Activated CD4-positive, alpha-beta T cell treated with anti-CD3 and anti-CD28 coated beads for 36 hours (primary cell): ENCODE measurements at regions of chr17 and their contacts with region 1.

Region 1: GRCh38 chr17:14427900-14428647 is 127.2 kb downstream of the HS3ST3B1 start:
- DNase-seq: peak; percentile 72
- ATAC-seq: peak; percentile 97
- H3K4me3 Mint-ChIP-seq: peak overlapping the region; percentile 63
- H3K27ac Mint-ChIP-seq: peak overlapping the region; percentile 97
- H3K4me1 Mint-ChIP-seq: peaks cover 59% of the 10 kb centered on the region
- H3K27me3 Mint-ChIP-seq: no peaks in the 10 kb centered on the region

Region 2: DNA sequence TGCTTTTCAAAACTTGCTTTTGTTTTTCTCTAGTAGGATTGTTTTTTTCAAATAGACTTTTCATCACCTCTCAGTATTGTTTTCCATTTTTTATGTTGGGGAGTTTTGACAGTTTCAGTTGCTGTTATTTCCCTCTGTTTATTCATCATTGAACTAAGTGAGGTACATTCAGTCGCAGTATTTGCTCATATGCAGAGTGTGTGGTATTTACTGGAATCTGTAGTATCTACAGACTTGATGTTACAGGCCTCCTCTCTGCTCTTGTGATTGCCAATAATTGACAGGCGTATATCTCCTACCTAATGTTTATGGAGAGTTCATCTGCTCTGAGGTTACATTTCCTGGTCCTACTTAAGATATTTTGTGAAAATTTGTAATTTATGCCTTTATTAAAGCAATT is 309.1 kb before region 1 on chr17:
- CTCF ChIA-PET with region 1: no interaction called
- POLR2A ChIA-PET with region 1: no interaction called
- intact Hi-C with region 1: loop called in 1 of 2 experiments (anchors 10 kb)
- DNase-seq: peak; percentile 17
- ATAC-seq: peak; percentile 84
- H3K4me3 Mint-ChIP-seq: no peak overlapping the region
- H3K27ac Mint-ChIP-seq: peak overlapping the region; percentile 92
- H3K4me1 Mint-ChIP-seq: peaks cover 89% of the 10 kb centered on the region
- H3K27me3 Mint-ChIP-seq: no peaks in the 10 kb centered on the region

Region 3: DNA sequence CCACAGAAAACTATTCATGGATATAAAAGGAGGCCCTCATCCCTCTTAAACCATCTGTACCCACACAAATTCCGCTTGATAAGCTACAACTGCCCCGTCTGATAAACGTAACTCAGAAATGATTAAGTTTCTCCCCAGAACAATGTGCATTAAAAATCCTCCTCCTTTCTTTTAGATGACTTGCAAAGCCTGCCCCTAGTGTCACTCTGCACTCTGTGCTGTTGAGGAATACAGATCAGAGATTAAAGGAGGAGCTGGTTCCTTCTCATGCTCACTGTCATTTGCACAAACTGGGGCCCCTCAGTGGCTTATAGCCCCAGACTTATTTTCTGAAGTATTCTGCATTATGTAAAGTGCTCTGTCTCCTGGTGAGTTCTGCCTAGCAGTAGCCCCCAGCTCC is 224.7 kb before region 1 on chr17:
- CTCF ChIA-PET with region 1: no interaction called
- POLR2A ChIA-PET with region 1: no interaction called
- intact Hi-C with region 1: loop called in 1 of 2 experiments (anchors 5 kb)
- DNase-seq: peak; percentile 60
- ATAC-seq: peak; percentile 55
- H3K4me3 Mint-ChIP-seq: no peak overlapping the region
- H3K27ac Mint-ChIP-seq: peak overlapping the region; percentile 71
- H3K4me1 Mint-ChIP-seq: peaks cover 83% of the 10 kb centered on the region
- H3K27me3 Mint-ChIP-seq: no peaks in the 10 kb centered on the region

Region 4: DNA sequence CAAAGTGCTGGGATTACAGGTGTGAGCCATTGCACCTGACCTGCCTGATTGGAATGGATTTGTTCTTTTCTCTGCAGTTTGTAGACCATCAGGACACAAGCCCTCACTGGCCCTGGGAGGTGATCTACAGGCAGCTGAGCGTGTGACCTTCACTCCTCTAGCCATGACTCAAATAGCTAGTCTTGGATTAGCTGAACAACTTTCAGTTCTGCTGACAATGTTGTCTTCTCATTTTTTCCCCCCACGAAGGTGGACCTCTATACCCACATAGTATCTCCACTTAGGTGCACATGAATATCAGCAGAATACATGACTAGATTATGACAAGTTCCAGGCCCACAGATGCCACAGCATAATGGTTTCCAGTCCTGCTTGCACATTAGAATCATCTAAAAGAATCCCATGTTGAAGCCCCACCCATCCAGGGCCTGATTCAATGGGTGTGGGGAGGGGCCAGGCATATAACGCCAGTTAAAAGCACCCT is 90.4 kb before region 1 on chr17:
- CTCF ChIA-PET with region 1: interaction called, 8 read pairs
- POLR2A ChIA-PET with region 1: no interaction called
- intact Hi-C with region 1: loop called (anchors 1 to 5 kb)
- DNase-seq: peak; percentile 83
- ATAC-seq: peak; percentile 93
- H3K4me3 Mint-ChIP-seq: no peak overlapping the region
- H3K27ac Mint-ChIP-seq: peak overlapping the region; percentile 76
- H3K4me1 Mint-ChIP-seq: peaks cover 83% of the 10 kb centered on the region
- H3K27me3 Mint-ChIP-seq: no peaks in the 10 kb centered on the region

Region 5: DNA sequence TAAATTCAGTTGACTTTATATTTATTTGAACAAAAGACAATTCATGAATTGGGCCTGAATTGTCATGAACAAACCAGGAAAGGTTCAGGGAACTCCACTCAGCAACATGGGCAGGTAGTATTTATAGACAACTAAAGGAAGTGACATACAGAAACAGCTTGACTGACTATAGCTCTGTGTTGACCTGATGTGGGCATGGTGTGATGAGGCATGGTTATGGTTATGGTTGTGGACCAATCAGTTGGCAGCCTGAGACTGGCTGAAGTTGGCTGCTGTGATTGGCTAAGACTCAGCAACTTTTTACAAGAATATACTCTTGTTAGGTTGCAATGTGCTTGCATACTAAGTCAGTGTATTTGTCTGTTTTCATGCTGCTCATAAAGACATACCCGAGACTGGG is 18.8 kb before region 1 on chr17:
- CTCF ChIA-PET with region 1: no interaction called
- POLR2A ChIA-PET with region 1: interaction called, 3 read pairs
- intact Hi-C with region 1: loop called in 1 of 2 experiments (anchors 1 kb)
- DNase-seq: no peak
- ATAC-seq: peak; percentile 33
- H3K4me3 Mint-ChIP-seq: no peak overlapping the region
- H3K27ac Mint-ChIP-seq: no peak overlapping the region
- H3K4me1 Mint-ChIP-seq: peaks cover 15% of the 10 kb centered on the region
- H3K27me3 Mint-ChIP-seq: no peaks in the 10 kb centered on the region

Region 6: GRCh38 chr17:14813649-14814365 is 385.7 kb after region 1 on chr17:
- CTCF ChIA-PET with region 1: no interaction called
- POLR2A ChIA-PET with region 1: no interaction called
- intact Hi-C with region 1: loop called in 1 of 2 experiments (anchors 10 kb)
- DNase-seq: peak; percentile 63
- ATAC-seq: no peak
- H3K4me3 Mint-ChIP-seq: no peak overlapping the region
- H3K27ac Mint-ChIP-seq: no peak overlapping the region
- H3K4me1 Mint-ChIP-seq: peaks cover 16% of the 10 kb centered on the region
- H3K27me3 Mint-ChIP-seq: peaks cover 11% of the 10 kb centered on the region